ENCODE measurements at regions of chr2 and their contacts with region 1.

Region 1: GRCh38 chr2:196263181-196263747 is 91.9 kb upstream of the STK17B start:
- DNase-seq: peak; percentile 77
- ATAC-seq: peak; percentile 76
- H3K4me3 Mint-ChIP-seq: peak overlapping the region; percentile 59
- H3K27ac Mint-ChIP-seq: peak overlapping the region; percentile 93
- H3K4me1 Mint-ChIP-seq: peaks cover 81% of the 10 kb centered on the region
- H3K27me3 Mint-ChIP-seq: no peaks in the 10 kb centered on the region

Region 2: DNA sequence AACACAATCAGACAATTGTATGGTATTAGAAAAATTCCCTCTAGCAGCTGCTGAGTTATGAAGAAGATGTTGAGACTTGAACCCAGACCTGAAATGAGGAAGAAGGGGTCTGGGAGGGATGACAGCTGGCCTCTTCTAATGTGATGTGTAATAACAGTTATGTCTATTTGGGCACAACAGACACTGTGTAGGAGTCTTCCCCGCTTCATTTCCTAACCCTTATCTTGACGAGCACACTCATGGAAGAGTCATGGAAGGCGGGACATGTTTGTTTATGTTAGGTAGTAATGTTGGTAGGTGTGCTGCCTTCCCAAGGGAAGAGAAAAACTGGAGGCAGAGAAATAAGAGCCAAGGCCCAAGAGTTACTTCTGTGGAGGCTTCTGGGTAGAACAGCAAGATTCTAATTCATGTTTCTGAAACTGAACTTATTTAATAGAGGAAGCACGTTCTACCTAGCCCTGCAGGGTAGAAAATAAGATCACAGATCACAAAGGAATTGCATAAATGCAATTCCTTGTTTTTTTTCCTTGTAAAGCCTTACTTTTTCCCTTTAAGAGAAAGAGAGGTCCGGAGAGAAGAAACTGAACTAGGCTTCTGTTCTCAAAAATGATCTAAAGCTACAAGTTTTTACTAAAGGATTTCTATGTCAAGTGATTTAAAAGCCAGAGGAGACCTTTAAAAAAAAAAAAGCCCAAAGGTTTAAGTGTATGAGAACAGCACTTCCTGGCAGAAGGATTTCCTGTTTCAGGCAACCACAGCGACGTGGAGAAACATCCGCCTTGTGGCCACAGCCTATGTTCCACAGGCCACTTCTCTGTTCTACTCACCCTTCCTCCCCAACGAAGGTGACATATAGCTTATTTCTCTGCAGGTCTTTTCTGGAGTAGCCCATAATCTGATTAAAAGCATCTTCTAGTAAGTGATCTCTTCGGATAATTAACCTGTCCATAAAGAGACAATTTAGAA is 23.4 kb before region 1 on chr2:
- CTCF ChIA-PET with region 1: interaction called, 25 read pairs
- DNase-seq: peak; percentile 96
- ATAC-seq: peak; percentile 66
- H3K4me3 Mint-ChIP-seq: peak overlapping the region; percentile 71
- H3K27ac Mint-ChIP-seq: peak overlapping the region; percentile 100
- H3K4me1 Mint-ChIP-seq: peaks cover 83% of the 10 kb centered on the region
- H3K27me3 Mint-ChIP-seq: no peaks in the 10 kb centered on the region

Region 3: GRCh38 chr2:196249860-196250259 is 13.4 kb before region 1 on chr2:
- CTCF ChIA-PET with region 1: interaction called, 28 read pairs
- DNase-seq: no peak
- ATAC-seq: peak; percentile 54
- H3K4me3 Mint-ChIP-seq: no peak overlapping the region
- H3K27ac Mint-ChIP-seq: peak overlapping the region; percentile 47
- H3K4me1 Mint-ChIP-seq: peaks cover 67% of the 10 kb centered on the region
- H3K27me3 Mint-ChIP-seq: no peaks in the 10 kb centered on the region

Region 4: GRCh38 chr2:196277002-196277401 is 13.7 kb after region 1 on chr2:
- CTCF ChIA-PET with region 1: interaction called, 25 read pairs
- DNase-seq: no peak
- ATAC-seq: peak; percentile 31
- H3K4me3 Mint-ChIP-seq: peak overlapping the region; percentile 11
- H3K27ac Mint-ChIP-seq: peak overlapping the region; percentile 52
- H3K4me1 Mint-ChIP-seq: peaks cover 42% of the 10 kb centered on the region
- H3K27me3 Mint-ChIP-seq: no peaks in the 10 kb centered on the region

Measured in activated CD8-positive, alpha-beta memory T cell treated with anti-CD3 and anti-CD28 coated beads, Interleukin-2, amount 10 ng/mL, durations not matched to agents 7 days and 5 days (primary cell).